A673 (cell line): ENCODE measurements at regions of chr17 and their contacts with region 1.

Region 1: DNA sequence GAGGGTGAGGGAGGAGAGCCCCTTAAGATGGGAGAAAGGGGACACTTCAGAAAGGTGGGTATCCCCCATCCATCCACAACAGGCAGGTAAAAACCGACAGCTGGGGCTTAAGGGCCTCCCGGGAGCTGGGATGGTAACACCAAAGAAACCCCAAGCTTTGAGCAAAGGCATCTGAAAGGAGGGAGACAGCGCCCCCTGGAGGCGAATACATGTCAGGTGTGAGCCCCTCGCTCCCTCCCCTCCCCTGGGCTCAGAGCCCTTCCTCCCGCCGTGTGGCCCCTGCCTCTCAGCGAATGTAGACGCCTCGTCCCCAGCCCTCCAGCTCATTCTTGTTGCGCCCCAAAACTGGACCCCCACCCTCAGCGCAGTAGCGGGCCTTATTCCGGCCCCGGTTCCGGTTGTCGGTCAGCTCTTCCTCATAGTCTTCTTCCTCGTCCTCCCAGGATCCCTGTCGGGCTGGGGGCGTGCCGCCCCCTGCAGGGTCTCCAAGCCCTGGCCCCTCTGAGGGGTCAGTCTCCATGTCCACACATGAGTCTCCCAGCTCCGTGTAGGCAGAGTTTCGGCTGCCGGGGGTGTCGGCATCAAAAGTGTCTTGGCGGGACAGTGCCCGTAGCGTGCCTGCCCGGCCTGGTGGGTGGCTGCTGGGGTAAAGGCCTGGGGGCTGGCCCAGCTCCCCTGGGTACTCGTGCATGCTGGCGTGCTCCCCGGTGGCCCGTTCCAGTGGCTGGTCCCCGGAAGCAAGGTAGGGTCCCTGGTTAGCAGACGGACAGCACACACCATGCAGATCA is 9.1 kb upstream of the ARL5C start:
- DNase-seq: peak; percentile 69
- H3K4me3 ChIP-seq: no peak overlapping the region
- H3K27ac ChIP-seq: no peak overlapping the region
- H3K4me1 ChIP-seq: no peaks in the 10 kb centered on the region
- H3K27me3 ChIP-seq: no peaks in the 10 kb centered on the region
- CTCF ChIP-seq: peak; percentile 71

Region 2: GRCh38 chr17:38982858-38983746 is 192.0 kb before region 1 on chr17:
- CTCF ChIA-PET with region 1: interaction called, 13 read pairs
- POLR2A ChIA-PET with region 1: no interaction called
- intact Hi-C with region 1: no loop called
- DNase-seq: peak; percentile 71
- H3K4me3 ChIP-seq: no peak overlapping the region
- H3K27ac ChIP-seq: no peak overlapping the region
- H3K4me1 ChIP-seq: no peaks in the 10 kb centered on the region
- H3K27me3 ChIP-seq: no peaks in the 10 kb centered on the region
- CTCF ChIP-seq: peak; percentile 67

Region 3: DNA sequence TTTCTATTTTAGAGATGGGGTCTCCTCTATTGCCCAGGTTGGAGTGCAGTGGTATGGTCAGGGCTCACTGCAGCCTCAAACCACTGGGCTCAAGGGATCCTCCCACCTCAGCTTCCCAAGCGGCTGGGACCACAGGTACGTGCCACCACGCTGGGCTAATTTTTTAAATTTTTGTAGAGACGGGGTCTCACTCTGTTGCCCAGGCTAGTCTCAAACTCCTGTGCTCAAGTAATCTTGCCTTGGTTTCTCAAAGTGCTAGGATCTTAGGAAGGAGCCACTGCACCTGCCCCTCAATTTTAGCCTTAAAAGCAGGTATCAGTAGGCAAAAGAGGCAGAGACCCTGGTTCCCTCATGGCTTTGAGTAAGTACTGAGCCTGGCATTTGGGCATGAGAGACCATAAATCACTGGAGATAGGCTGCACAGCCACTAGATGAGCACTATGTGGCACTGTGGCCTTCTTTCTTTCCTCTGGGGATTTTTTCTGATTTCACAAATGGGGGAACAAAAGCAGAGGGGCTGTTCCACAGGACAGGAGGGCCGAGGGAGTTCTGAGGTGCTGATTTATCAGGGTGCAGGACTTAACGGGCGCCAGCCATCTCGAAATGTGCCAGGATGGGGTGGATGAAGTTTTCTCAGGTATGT is 105.9 kb before region 1 on chr17:
- CTCF ChIA-PET with region 1: no interaction called
- POLR2A ChIA-PET with region 1: no interaction called
- intact Hi-C with region 1: no loop called
- DNase-seq: peak; percentile 45
- H3K4me3 ChIP-seq: no peak overlapping the region
- H3K27ac ChIP-seq: no peak overlapping the region
- H3K4me1 ChIP-seq: no peaks in the 10 kb centered on the region
- H3K27me3 ChIP-seq: no peaks in the 10 kb centered on the region
- CTCF ChIP-seq: peak; percentile 59

Region 4: DNA sequence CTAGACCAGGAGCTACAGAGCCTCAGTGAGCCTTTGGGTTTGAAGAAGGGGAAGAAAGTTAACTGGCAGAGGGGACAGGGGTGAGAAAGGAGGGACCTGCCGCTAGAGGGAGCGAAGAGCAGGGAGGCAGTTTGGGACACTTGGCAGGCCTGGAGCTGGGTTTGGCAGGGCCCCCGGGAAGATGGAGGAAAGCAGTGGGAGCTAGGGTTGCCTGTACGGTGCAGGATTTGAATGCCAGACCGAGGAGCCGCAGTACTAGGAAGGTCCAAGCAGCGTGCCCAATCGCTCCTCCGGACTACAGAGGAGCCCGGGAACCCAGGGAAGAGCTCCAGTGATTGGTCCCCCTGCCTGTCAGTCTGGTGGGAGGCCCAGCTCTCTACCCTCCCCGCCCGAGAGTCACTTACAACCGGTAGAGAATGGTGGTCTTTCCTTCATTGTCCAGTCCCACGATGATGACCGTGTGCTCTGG is 10.4 kb before region 1 on chr17:
- CTCF ChIA-PET with region 1: interaction called, 13 read pairs
- POLR2A ChIA-PET with region 1: no interaction called
- intact Hi-C with region 1: no loop called
- DNase-seq: peak; percentile 82
- H3K4me3 ChIP-seq: peak overlapping the region; percentile 47
- H3K27ac ChIP-seq: no peak overlapping the region
- H3K4me1 ChIP-seq: no peaks in the 10 kb centered on the region
- H3K27me3 ChIP-seq: no peaks in the 10 kb centered on the region
- CTCF ChIP-seq: peak; percentile 71

Region 5: GRCh38 chr17:39261286-39261685 is 86.2 kb after region 1 on chr17:
- CTCF ChIA-PET with region 1: interaction called, 11 read pairs
- POLR2A ChIA-PET with region 1: no interaction called
- intact Hi-C with region 1: no loop called
- DNase-seq: peak; percentile 19
- H3K4me3 ChIP-seq: no peak overlapping the region
- H3K27ac ChIP-seq: no peak overlapping the region
- H3K4me1 ChIP-seq: no peaks in the 10 kb centered on the region
- H3K27me3 ChIP-seq: no peaks in the 10 kb centered on the region
- CTCF ChIP-seq: 0 out of 2 replicates have a peak, but pooled peaks have one; percentile 40